IMR-90 (cell line): ENCODE measurements at regions of chr2 and their contacts with region 1.

Region 1: GRCh38 chr2:112048887-112049286 is 6.2 kb upstream of the TMEM87B start:
- DNase-seq: peak; percentile 74
- ATAC-seq: peak; percentile 95
- H3K4me3 ChIP-seq: no peak overlapping the region
- H3K27ac ChIP-seq: no peak overlapping the region
- H3K4me1 ChIP-seq: no peaks in the 10 kb centered on the region
- H3K27me3 ChIP-seq: no peaks in the 10 kb centered on the region
- CTCF ChIP-seq: peak; percentile 89
- POLR2A ChIP-seq: no peak
- RAD21 ChIP-seq: peak; percentile 74

Region 2: DNA sequence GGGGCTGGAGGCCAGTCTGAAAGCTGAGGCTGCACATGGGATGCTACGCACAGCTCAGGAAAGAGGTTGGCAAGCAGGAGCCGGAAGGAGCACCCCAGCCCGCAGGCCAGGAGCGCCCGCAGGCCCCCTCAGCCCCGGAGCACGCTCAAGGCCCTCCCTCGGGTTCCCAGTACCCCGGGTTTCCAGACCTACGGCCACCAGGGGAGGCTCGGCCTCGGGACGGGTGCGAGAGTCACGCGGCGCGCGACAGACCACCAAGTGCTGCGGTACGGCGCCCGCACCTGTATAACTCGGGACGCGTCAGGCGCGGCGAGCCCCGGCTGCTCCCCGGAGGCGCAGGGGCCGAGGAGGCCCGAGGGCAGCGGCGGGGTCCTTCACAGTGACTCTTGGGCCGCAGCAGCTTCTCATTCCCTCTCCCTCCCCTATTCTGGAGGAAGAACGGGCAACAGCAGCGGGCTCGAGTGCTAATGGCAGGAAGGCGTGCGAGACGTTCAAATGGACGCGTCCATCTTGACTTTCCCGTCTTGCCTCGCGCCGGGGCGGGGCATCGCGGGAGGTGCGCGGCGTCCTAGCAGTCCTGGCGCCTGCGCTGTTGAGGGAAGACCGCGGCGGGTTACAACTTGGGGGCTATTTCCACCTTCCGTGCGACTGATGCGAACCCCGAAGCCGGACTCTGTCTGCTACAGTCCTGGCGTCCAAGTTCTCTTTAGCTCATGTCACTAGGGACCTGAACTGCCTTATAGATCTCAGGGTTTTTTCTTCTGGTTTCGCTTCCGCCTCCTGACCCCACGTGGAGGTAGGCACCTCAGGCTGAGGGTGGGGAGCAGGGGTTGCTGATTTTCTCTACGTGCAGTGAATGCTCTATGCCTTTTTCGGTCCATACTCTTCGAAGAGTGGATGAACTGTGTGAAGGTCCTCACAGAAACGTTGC is 165.0 kb before region 1 on chr2 and contains the start of gene ANAPC1:
- CTCF ChIA-PET with region 1: interaction called, 5 read pairs
- POLR2A ChIA-PET with region 1: no interaction called
- dilution Hi-C with region 1: no loop called
- in situ Hi-C with region 1: no loop called
- intact Hi-C with region 1: loop called (anchors 1 kb)
- DNase-seq: peak; percentile 69
- ATAC-seq: peak; percentile 99
- H3K4me3 ChIP-seq: peak within 1 kb of the TSS; percentile 61
- H3K27ac ChIP-seq: peak within 1 kb of the TSS; percentile 60
- H3K4me1 ChIP-seq: no peaks in the 10 kb centered on the region
- H3K27me3 ChIP-seq: no peaks in the 10 kb centered on the region
- CTCF ChIP-seq: no peak
- POLR2A ChIP-seq: peak; percentile 79; the same call in 1 of the 2 replicates
- RAD21 ChIP-seq: no peak
- total RNA-seq, gene ANAPC1: 50.7 and 70.0 TPM in 2 replicates

Region 3: GRCh38 chr2:111897924-111898702 is 150.8 kb before region 1 on chr2 and contains the start of gene MERTK:
- CTCF ChIA-PET with region 1: interaction called, 3 read pairs
- POLR2A ChIA-PET with region 1: no interaction called
- dilution Hi-C with region 1: no loop called
- in situ Hi-C with region 1: loop called (anchors 5 kb)
- intact Hi-C with region 1: no loop called
- DNase-seq: peak; percentile 71
- ATAC-seq: peak; percentile 87
- H3K4me3 ChIP-seq: peak within 1 kb of the TSS; percentile 67
- H3K27ac ChIP-seq: peak within 1 kb of the TSS; percentile 47; the same call in 1 of the 2 replicates
- H3K4me1 ChIP-seq: peaks cover 4% of the 10 kb centered on the region
- H3K27me3 ChIP-seq: peaks cover 53% of the 10 kb centered on the region
- CTCF ChIP-seq: peak; percentile 54
- POLR2A ChIP-seq: no peak
- RAD21 ChIP-seq: peak; percentile 58
- total RNA-seq, gene MERTK: 0.28 and 0.36 TPM in 2 replicates

Region 4: DNA sequence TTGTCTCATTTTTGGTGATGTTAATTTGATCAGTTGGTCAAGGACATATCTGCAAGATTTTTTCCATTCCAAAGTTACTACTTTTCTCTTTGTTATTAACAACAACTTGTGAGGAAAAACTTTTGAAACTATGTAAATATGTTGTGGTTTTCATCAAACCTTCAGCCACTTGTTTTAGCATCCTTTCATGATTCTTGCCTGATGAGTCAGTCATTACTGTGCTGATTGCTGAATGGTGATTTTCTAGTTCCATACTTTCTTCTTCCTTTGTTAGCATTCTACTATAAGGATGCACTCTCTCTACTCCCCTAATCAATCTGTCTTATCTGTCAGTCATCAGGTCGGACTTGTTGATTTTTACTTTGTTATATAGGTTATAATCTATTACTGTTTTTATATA is 17.1 kb after region 1 on chr2:
- CTCF ChIA-PET with region 1: no interaction called
- POLR2A ChIA-PET with region 1: no interaction called
- dilution Hi-C with region 1: no loop called
- in situ Hi-C with region 1: no loop called
- intact Hi-C with region 1: no loop called
- DNase-seq: peak; percentile 86
- ATAC-seq: peak; percentile 87
- H3K4me3 ChIP-seq: no peak overlapping the region
- H3K27ac ChIP-seq: peak overlapping the region; percentile 88; the same call in 1 of the 2 replicates
- H3K4me1 ChIP-seq: peaks cover 12% of the 10 kb centered on the region
- H3K27me3 ChIP-seq: no peaks in the 10 kb centered on the region
- CTCF ChIP-seq: no peak
- POLR2A ChIP-seq: no peak
- RAD21 ChIP-seq: no peak